A549 (cell line): ENCODE measurements at regions of chr11 and their contacts with region 1.

Region 1: GRCh38 chr11:47152953-47153950 is 23.4 kb downstream of the ARFGAP2 start:
- DNase-seq: peak; percentile 77 to 87
- ATAC-seq: peak; percentile 77 to 87
- H3K4me3 ChIP-seq: no peak overlapping the region
- H3K27ac ChIP-seq: no peak overlapping the region
- H3K4me1 ChIP-seq: no peaks in the 10 kb centered on the region
- CTCF ChIP-seq: peak; percentile 91
- EP300 ChIP-seq: no peak
- POLR2A ChIP-seq: no peak
- RAD21 ChIP-seq: peak; percentile 94

Region 2: GRCh38 chr11:46868912-46869311 is 284.3 kb before region 1 on chr11:
- CTCF ChIA-PET with region 1: interaction called, 16 read pairs
- POLR2A ChIA-PET with region 1: no interaction called
- DNase-seq: no peak
- ATAC-seq: no peak
- H3K4me3 ChIP-seq: no peak overlapping the region
- H3K27ac ChIP-seq: no peak overlapping the region
- H3K4me1 ChIP-seq: no peaks in the 10 kb centered on the region
- CTCF ChIP-seq: no peak
- EP300 ChIP-seq: no peak
- POLR2A ChIP-seq: no peak
- RAD21 ChIP-seq: no peak

Region 3: GRCh38 chr11:46889689-46890475 is 263.4 kb before region 1 on chr11:
- CTCF ChIA-PET with region 1: interaction called, 120 read pairs
- POLR2A ChIA-PET with region 1: no interaction called
- DNase-seq: peak; percentile 62 to 75
- ATAC-seq: peak; percentile 90 to 92
- H3K4me3 ChIP-seq: no peak overlapping the region
- H3K27ac ChIP-seq: no peak overlapping the region
- H3K4me1 ChIP-seq: no peaks in the 10 kb centered on the region
- CTCF ChIP-seq: peak; percentile 91
- EP300 ChIP-seq: no peak
- POLR2A ChIP-seq: no peak
- RAD21 ChIP-seq: peak; percentile 91 to 96

Region 4: GRCh38 chr11:46906609-46907041 is 246.6 kb before region 1 on chr11:
- CTCF ChIA-PET with region 1: interaction called, 103 read pairs
- POLR2A ChIA-PET with region 1: no interaction called
- DNase-seq: no peak
- ATAC-seq: no peak
- H3K4me3 ChIP-seq: no peak overlapping the region
- H3K27ac ChIP-seq: no peak overlapping the region
- H3K4me1 ChIP-seq: no peaks in the 10 kb centered on the region
- CTCF ChIP-seq: no peak
- EP300 ChIP-seq: no peak
- POLR2A ChIP-seq: no peak
- RAD21 ChIP-seq: no peak

Region 5: DNA sequence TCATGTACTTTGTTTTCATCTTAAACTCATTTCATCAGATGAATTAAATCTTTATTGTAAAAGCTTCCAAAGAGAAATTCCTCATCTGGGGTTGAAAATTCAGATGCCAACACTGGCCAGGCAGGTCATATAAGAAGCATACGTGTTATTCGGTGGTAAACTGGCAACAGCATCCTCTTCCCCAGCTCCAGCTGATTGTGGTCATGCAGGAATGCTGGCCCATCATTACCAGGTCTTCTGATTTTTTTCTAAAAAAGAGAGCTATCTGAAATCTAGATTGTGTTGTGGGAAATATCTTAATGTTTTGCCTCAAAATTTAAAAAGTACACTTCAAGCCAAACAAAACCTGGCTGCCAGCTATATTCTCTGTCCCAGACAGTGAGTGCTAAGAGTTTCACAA is 30.2 kb before region 1 on chr11:
- CTCF ChIA-PET with region 1: interaction called, 12 read pairs
- POLR2A ChIA-PET with region 1: no interaction called
- DNase-seq: no peak
- ATAC-seq: no peak
- H3K4me3 ChIP-seq: no peak overlapping the region
- H3K27ac ChIP-seq: no peak overlapping the region
- H3K4me1 ChIP-seq: no peaks in the 10 kb centered on the region
- CTCF ChIP-seq: no peak
- EP300 ChIP-seq: no peak
- POLR2A ChIP-seq: no peak
- RAD21 ChIP-seq: no peak

Region 6: DNA sequence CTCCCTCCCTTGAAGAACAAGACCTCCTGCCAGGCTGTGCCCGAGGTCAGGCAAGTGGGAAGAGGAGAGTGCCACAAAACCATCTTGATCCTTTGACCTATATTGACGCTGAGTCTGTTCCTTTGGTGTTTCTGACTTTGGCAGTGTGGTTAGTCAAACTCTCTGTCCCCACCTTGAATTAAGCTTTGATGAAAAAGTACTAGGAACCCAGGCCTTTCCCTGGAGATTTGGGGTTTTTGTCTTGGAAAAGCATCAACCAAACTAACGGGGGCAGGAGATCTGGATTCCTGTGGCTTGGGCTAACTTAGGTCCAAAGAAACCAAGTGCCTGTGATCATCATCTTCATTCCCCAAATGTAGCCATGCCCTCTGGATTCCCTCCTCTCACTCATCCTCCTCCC is 16.9 kb before region 1 on chr11:
- CTCF ChIA-PET with region 1: interaction called, 21 read pairs
- POLR2A ChIA-PET with region 1: no interaction called
- DNase-seq: no peak
- ATAC-seq: no peak
- H3K4me3 ChIP-seq: no peak overlapping the region
- H3K27ac ChIP-seq: no peak overlapping the region
- H3K4me1 ChIP-seq: no peaks in the 10 kb centered on the region
- CTCF ChIP-seq: no peak
- EP300 ChIP-seq: no peak
- POLR2A ChIP-seq: no peak
- RAD21 ChIP-seq: no peak